ENCODE measurements at regions of chr9 and their contacts with region 1.

Region 1: DNA sequence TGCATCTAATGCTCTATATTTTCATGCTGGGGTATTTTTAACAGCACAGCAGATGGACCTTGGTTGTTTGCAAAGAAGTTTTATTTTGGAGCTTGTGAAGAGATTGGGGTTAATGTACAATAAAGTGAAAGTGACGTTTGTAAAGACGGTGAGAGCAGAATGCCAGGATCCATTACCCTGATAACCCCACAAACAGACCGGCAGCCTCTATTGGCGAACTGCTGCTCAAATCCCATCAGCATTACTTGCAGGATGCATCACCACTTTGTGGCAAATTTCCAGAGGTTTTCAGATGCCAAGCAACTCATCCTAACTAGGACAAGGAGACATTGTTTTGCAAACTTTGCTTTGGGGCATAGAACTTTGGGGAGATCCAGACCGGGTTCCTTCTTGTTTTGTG is 383.3 kb upstream of the ZNF462 start:
- DNase-seq: no peak
- H3K4me3 ChIP-seq: no peak overlapping the region
- H3K27ac ChIP-seq: no peak overlapping the region
- H3K4me1 ChIP-seq: no peaks in the 10 kb centered on the region
- H3K27me3 ChIP-seq: no peaks in the 10 kb centered on the region
- CTCF ChIP-seq: no peak
- POLR2A ChIP-seq: no peak

Region 2: DNA sequence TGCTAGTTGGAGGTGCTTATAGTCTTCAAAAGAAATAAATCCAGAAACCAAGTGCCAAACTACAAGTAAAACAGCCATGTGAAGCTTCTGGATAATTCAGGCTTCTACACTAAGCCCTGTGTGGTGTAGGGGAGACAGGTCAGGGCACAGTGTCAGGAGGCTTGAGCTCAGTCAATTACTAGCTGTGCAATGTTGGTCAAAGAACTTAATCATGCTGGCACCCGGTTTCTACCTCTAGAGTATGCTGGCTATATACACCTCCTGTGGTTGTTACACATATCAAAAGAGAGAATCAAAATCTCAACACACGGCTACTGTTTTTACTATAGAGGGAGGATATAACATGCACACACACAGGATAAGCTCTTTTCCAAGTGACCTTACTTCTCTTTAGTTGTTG is 86.5 kb before region 1 on chr9:
- CTCF ChIA-PET with region 1: no interaction called
- POLR2A ChIA-PET with region 1: no interaction called
- dilution Hi-C with region 1: no loop called
- intact Hi-C with region 1: no loop called
- DNase-seq: no peak
- H3K4me3 ChIP-seq: no peak overlapping the region
- H3K27ac ChIP-seq: no peak overlapping the region
- H3K4me1 ChIP-seq: no peaks in the 10 kb centered on the region
- H3K27me3 ChIP-seq: no peaks in the 10 kb centered on the region
- CTCF ChIP-seq: no peak
- POLR2A ChIP-seq: no peak

Region 3: GRCh38 chr9:106467113-106467864 is 12.4 kb before region 1 on chr9:
- CTCF ChIA-PET with region 1: no interaction called
- POLR2A ChIA-PET with region 1: no interaction called
- dilution Hi-C with region 1: no loop called
- intact Hi-C with region 1: no loop called
- DNase-seq: no peak
- H3K4me3 ChIP-seq: no peak overlapping the region
- H3K27ac ChIP-seq: no peak overlapping the region
- H3K4me1 ChIP-seq: no peaks in the 10 kb centered on the region
- H3K27me3 ChIP-seq: no peaks in the 10 kb centered on the region
- CTCF ChIP-seq: no peak
- POLR2A ChIP-seq: no peak

Region 4: GRCh38 chr9:106503759-106504158 is 24.1 kb after region 1 on chr9:
- CTCF ChIA-PET with region 1: no interaction called
- POLR2A ChIA-PET with region 1: no interaction called
- dilution Hi-C with region 1: no loop called
- intact Hi-C with region 1: loop called (anchors 1 kb)
- DNase-seq: no peak
- H3K4me3 ChIP-seq: no peak overlapping the region
- H3K27ac ChIP-seq: no peak overlapping the region
- H3K4me1 ChIP-seq: no peaks in the 10 kb centered on the region
- H3K27me3 ChIP-seq: no peaks in the 10 kb centered on the region
- CTCF ChIP-seq: no peak
- POLR2A ChIP-seq: no peak

Region 5: GRCh38 chr9:106621313-106622163 is 141.9 kb after region 1 on chr9:
- CTCF ChIA-PET with region 1: no interaction called
- POLR2A ChIA-PET with region 1: no interaction called
- dilution Hi-C with region 1: no loop called
- intact Hi-C with region 1: no loop called
- DNase-seq: no peak
- H3K4me3 ChIP-seq: no peak overlapping the region
- H3K27ac ChIP-seq: no peak overlapping the region
- H3K4me1 ChIP-seq: no peaks in the 10 kb centered on the region
- H3K27me3 ChIP-seq: no peaks in the 10 kb centered on the region
- CTCF ChIP-seq: no peak
- POLR2A ChIP-seq: no peak

Region 6: GRCh38 chr9:107386396-107386795 is 906.7 kb after region 1 on chr9:
- CTCF ChIA-PET with region 1: no interaction called
- POLR2A ChIA-PET with region 1: no interaction called
- dilution Hi-C with region 1: no loop called
- intact Hi-C with region 1: no loop called
- DNase-seq: no peak
- H3K4me3 ChIP-seq: no peak overlapping the region
- H3K27ac ChIP-seq: no peak overlapping the region
- H3K4me1 ChIP-seq: no peaks in the 10 kb centered on the region
- H3K27me3 ChIP-seq: no peaks in the 10 kb centered on the region
- CTCF ChIP-seq: no peak
- POLR2A ChIP-seq: no peak